ENCODE measurements at regions of chrX and their contacts with region 1.

Region 1: GRCh38 chrX:101799387-101799786 is 132.4 kb downstream of the ZMAT1 start:
- DNase-seq: peak; percentile 84
- ATAC-seq: peak; percentile 98 to 100

Region 2: GRCh38 chrX:100819837-100820666 is 979.3 kb before region 1 on chrX and contains the start of gene CSTF2:
- intact Hi-C with region 1: loop called in 1 of 2 experiments (anchors 5 kb)
- DNase-seq: peak; percentile 86
- ATAC-seq: peak; percentile 99 to 100
- total RNA-seq, gene CSTF2: 7.1 to 7.5 TPM

Region 3: DNA sequence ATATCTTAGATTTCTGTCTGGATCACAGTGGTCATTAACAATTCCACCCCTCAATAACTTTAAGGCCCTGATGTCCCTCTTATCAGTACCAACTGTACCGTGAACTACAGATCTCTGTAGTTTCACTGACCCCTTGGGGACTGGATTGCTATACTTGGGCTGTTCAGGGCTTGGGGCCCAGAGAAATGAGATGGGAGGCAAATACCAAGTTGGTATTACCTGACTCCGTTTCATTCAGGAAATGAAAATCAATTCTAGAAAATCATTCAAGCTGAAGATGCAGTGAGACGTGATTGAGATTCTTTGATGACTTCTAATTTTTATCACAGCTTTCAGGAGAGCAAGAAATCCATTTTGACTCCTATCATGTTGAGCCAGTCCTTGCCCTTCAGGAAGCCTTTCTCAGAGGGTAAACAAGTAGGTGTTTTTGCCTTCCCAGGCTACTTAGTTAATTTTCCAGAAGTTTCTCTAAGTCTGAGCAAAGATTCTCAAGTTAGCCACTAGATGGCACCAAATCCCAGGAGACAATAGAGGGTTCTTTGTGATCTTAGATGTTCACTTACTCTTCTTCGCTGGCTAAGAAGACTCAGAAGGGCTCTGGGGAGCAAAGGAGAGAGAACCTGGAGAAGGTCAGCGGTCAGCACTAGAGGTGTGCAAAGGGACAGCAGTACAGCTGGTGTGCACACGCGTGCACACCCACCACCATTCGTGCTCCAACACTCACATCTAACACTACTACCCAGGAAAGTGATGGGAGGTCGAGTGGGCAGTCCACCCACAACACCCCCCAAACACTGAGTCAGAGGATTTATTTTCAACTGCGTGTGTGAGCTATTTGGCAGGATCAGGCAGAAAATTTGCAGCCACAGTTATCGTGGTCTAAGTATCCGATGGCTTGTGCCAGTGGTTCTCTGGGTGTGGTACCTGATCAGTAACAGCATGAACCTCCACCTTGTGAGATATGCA is 383.9 kb before region 1 on chrX:
- intact Hi-C with region 1: loop called in 1 of 2 experiments (anchors 5 kb)
- DNase-seq: no peak
- ATAC-seq: peak; percentile 27 to 42

Region 4: GRCh38 chrX:101595739-101596419 is 203.5 kb before region 1 on chrX:
- intact Hi-C with region 1: loop called in 1 of 2 experiments (anchors 5 kb)
- DNase-seq: no peak
- ATAC-seq: peak; percentile 30 to 77

Region 5: GRCh38 chrX:101906136-101906796 is 106.9 kb after region 1 on chrX:
- intact Hi-C with region 1: no loop called
- DNase-seq: no peak
- ATAC-seq: no peak

Measured in left cardiac atrium (tissue), 4 donors.